ENCODE measurements at regions of chr16 and their contacts with region 1.

Region 1: DNA sequence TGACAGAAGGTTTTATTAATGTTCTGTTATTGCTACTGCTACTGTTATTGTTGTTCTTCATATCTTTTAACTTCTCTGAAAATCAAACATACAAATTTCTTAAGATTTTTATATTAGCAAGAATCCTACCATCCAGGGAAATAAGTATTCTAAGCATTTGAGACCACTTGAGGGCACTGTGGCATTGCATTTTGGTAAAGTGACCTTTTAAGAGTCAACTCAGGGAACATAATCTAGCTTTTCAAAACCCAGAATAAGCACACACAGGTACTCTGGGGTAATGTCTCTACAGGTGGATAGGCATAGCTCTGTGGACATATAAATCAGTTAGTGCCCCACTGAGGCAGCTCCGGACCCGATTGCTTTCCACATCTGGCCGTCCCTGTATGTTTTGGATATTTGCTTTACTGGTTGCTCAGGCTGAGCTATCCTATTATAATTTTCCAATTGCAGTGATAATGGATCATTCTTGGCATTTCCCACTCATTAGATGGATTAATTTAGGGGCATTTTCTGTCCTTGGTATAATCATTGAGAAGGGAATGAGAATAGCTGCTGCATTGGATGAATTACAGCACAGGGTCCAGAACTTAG is 1425.1 kb upstream of the CDH8 start:
- DNase-seq: peak; percentile 72
- H3K4me3 ChIP-seq: no peak overlapping the region
- H3K27ac ChIP-seq: no peak overlapping the region
- H3K4me1 ChIP-seq: peaks cover 9% of the 10 kb centered on the region
- H3K27me3 ChIP-seq: no peaks in the 10 kb centered on the region
- CTCF ChIP-seq: peak; percentile 42 to 53
- POLR2A ChIP-seq: no peak

Region 2: DNA sequence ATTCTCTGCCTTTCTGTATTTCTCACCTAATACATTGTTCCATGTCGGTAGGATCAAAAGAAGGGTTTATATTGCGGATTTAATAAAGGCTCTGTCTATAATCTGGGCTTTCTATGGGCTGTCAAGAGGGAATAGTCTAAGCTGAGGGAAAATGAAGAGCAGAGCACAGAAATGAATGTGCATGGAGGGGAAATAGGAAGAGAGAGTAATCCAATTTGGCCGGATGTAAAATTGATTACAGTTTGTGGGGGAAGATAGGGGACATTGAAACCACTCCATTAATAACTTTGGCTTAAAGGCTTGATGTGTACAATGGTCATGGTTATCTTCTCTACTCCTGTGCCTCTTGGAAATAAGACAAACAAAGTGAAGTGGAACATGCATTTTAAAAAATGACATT is 1090.9 kb before region 1 on chr16:
- CTCF ChIA-PET with region 1: no interaction called
- POLR2A ChIA-PET with region 1: no interaction called
- dilution Hi-C with region 1: no loop called
- intact Hi-C with region 1: no loop called
- DNase-seq: no peak
- H3K4me3 ChIP-seq: no peak overlapping the region
- H3K27ac ChIP-seq: no peak overlapping the region
- H3K4me1 ChIP-seq: no peaks in the 10 kb centered on the region
- H3K27me3 ChIP-seq: no peaks in the 10 kb centered on the region
- CTCF ChIP-seq: no peak
- POLR2A ChIP-seq: no peak

Region 3: DNA sequence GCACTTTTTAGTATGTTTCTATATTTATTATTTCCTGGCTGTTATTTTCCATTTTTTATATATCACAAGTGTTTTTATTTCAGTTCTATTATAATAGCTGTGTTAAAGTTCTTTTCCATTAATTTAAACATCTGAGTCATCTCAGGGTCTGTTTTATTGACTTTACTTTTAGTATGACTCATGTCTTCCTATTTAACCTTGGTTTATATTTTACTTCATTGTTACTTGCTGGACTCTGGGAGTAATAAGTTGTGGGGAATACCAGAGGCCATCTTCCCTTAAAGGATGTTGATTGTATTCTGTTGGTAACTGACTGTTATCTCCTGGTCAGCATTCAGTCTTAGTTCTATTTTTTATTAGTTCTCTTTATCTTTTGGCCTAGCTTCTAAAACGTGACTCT is 152.4 kb after region 1 on chr16:
- CTCF ChIA-PET with region 1: interaction called, 14 read pairs
- POLR2A ChIA-PET with region 1: no interaction called
- dilution Hi-C with region 1: no loop called
- intact Hi-C with region 1: no loop called
- DNase-seq: peak; percentile 84
- H3K4me3 ChIP-seq: no peak overlapping the region
- H3K27ac ChIP-seq: peak overlapping the region; percentile 58
- H3K4me1 ChIP-seq: peaks cover 24% of the 10 kb centered on the region
- H3K27me3 ChIP-seq: peaks cover 0 to 1% of the 10 kb centered on the region in 2 experiments
- CTCF ChIP-seq: no peak
- POLR2A ChIP-seq: no peak

Region 4: DNA sequence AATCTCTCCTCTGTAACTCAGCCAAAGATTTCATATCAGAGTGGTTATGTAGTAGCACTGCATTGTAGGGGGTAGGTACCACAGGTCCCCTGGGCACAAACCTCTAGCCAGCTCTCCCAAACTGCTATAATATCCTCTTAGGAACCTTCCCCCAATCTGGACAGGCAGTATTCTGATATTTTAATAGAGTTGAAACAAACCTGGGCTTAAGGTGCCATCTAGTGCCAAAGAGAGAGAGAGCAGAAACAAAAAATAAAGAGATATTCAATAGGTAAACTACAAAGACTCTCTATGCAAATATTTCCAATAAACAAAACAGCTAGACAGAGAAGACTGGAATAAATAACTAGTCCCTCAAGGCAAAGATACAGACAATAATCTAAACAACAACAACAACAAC is 590.5 kb after region 1 on chr16:
- CTCF ChIA-PET with region 1: interaction called, 95 read pairs
- POLR2A ChIA-PET with region 1: no interaction called
- dilution Hi-C with region 1: no loop called
- intact Hi-C with region 1: loop called (anchors 1 kb)
- DNase-seq: peak; percentile 19
- H3K4me3 ChIP-seq: no peak overlapping the region
- H3K27ac ChIP-seq: no peak overlapping the region
- H3K4me1 ChIP-seq: no peaks in the 10 kb centered on the region
- H3K27me3 ChIP-seq: no peaks in the 10 kb centered on the region
- CTCF ChIP-seq: peak in 1 of 2 donors; percentile 19
- POLR2A ChIP-seq: no peak

Region 5: GRCh38 chr16:64089697-64090096 is 628.4 kb after region 1 on chr16:
- CTCF ChIA-PET with region 1: interaction called, 11 read pairs
- POLR2A ChIA-PET with region 1: no interaction called
- dilution Hi-C with region 1: no loop called
- intact Hi-C with region 1: no loop called
- DNase-seq: peak; percentile 55
- H3K4me3 ChIP-seq: no peak overlapping the region
- H3K27ac ChIP-seq: no peak overlapping the region
- H3K4me1 ChIP-seq: no peaks in the 10 kb centered on the region
- H3K27me3 ChIP-seq: no peaks in the 10 kb centered on the region
- CTCF ChIP-seq: peak; percentile 34 to 40
- POLR2A ChIP-seq: no peak

Region 6: DNA sequence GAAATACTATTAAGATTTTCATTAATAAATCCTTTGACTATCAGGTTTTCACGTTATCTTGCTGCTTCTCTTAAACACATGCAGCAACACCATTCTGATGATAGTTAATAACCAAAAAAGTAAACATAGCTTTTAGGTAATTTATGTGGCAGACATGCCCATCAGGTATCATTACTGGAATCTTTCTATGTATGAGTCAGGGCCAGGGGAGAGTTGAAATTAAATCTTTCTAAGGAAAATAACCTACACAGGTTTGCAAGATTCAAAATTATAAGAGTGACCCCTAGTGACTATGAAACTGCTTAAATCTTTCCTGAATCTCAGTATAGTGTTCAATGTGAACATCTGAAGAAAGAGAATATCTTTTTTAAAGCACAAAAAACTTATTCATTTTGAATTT is 993.9 kb after region 1 on chr16:
- CTCF ChIA-PET with region 1: interaction called, 3 read pairs
- POLR2A ChIA-PET with region 1: no interaction called
- dilution Hi-C with region 1: no loop called
- intact Hi-C with region 1: loop called (anchors 1 kb)
- DNase-seq: peak; percentile 38
- H3K4me3 ChIP-seq: no peak overlapping the region
- H3K27ac ChIP-seq: no peak overlapping the region
- H3K4me1 ChIP-seq: no peaks in the 10 kb centered on the region
- H3K27me3 ChIP-seq: no peaks in the 10 kb centered on the region
- CTCF ChIP-seq: no peak
- POLR2A ChIP-seq: no peak

Region 7: GRCh38 chr16:64983963-64984362 is 1522.6 kb after region 1 on chr16:
- CTCF ChIA-PET with region 1: interaction called, 7 read pairs
- POLR2A ChIA-PET with region 1: no interaction called
- dilution Hi-C with region 1: no loop called
- intact Hi-C with region 1: loop called (anchors 1 kb)
- DNase-seq: peak; percentile 80
- H3K4me3 ChIP-seq: no peak overlapping the region
- H3K27ac ChIP-seq: no peak overlapping the region
- H3K4me1 ChIP-seq: no peaks in the 10 kb centered on the region
- H3K27me3 ChIP-seq: no peaks in the 10 kb centered on the region
- CTCF ChIP-seq: peak; percentile 74 to 79
- POLR2A ChIP-seq: no peak

Measured in endothelial cell of umbilical vein (primary cell).